ENCODE measurements at regions of chr14 and their contacts with region 1.

Region 1: DNA sequence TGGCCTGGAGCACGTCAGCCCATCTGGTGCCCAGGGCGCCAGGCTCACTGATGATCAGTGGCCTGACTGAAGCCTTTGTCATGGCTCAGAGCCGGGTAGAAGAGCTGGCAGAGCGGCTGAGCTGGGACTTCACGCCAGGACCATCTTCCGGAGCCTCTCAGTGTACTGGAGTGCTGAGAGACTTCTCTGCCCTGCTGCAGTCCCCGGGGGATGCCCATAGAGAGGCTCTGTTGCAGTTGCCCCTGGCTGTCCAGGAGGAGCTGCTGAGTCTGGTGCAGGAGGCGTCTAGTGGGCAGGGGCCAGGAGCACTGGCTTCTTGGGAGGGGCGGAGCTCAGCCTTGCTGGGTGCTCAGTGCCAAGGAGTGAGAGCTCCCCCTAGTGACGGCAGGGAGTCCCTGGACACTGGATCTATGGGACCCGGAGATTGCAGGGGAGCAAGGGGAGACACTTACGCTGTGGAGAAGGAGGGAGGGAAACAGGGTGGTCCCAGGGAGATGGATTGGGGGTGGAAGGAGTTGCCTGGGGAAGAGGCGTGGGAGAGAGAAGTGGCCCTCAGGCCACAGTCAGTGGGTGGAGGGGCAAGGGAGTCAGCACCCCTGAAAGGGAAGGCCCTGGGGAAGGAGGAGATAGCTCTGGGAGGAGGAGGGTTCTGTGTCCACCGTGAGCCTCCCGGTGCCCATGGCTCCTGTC is 2.0 kb downstream of the KHNYN start:
- DNase-seq: peak; percentile 95 to 96
- H3K4me3 ChIP-seq: peak overlapping the region in 1 of 4 experiments; percentile 76; a peak in 2 of 8 replicates
- H3K27ac ChIP-seq: no peak overlapping the region
- H3K4me1 ChIP-seq: peaks cover 6 to 21% (median 15%) of the 10 kb centered on the region in 4 experiments
- H3K27me3 ChIP-seq: peaks cover 0 to 17% (median 1%) of the 10 kb centered on the region in 4 experiments; a peak in 3 of 7 replicates
- CTCF ChIP-seq: peak; percentile 87 to 100 (median 99)
- EP300 ChIP-seq: no peak
- POLR2A ChIP-seq: no peak
- RAD21 ChIP-seq: peak; percentile 96 to 98

Region 2: DNA sequence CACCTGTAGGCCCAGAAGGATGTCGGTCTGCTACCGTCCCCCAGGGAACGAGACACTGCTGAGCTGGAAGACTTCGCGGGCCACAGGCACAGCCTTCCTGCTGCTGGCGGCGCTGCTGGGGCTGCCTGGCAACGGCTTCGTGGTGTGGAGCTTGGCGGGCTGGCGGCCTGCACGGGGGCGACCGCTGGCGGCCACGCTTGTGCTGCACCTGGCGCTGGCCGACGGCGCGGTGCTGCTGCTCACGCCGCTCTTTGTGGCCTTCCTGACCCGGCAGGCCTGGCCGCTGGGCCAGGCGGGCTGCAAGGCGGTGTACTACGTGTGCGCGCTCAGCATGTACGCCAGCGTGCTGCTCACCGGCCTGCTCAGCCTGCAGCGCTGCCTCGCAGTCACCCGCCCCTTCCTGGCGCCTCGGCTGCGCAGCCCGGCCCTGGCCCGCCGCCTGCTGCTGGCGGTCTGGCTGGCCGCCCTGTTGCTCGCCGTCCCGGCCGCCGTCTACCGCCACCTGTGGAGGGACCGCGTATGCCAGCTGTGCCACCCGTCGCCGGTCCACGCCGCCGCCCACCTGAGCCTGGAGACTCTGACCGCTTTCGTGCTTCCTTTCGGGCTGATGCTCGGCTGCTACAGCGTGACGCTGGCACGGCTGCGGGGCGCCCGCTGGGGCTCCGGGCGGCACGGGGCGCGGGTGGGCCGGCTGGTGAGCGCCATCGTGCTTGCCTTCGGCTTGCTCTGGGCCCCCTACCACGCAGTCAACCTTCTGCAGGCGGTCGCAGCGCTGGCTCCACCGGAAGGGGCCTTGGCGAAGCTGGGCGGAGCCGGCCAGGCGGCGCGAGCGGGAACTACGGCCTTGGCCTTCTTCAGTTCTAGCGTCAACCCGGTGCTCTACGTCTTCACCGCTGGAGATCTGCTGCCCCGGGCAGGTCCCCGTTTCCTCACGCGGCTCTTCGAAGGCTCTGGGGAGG is 120.8 kb before region 1 on chr14 and contains the start of gene LTB4R:
- CTCF ChIA-PET with region 1: interaction called, 664 read pairs
- POLR2A ChIA-PET with region 1: interaction called, 7 read pairs
- DNase-seq: no peak
- H3K4me3 ChIP-seq: no peak within 1 kb of the TSS
- H3K27ac ChIP-seq: no peak within 1 kb of the TSS
- H3K4me1 ChIP-seq: no peaks in the 10 kb centered on the region; a peak in 2 of 7 replicates
- H3K27me3 ChIP-seq: peaks cover 0 to 4% (median 0%) of the 10 kb centered on the region in 4 experiments; a peak in 3 of 7 replicates
- CTCF ChIP-seq: no peak
- EP300 ChIP-seq: no peak
- POLR2A ChIP-seq: no peak
- RAD21 ChIP-seq: no peak
- total RNA-seq, gene LTB4R: 4.1 and 6.8 TPM in 2 replicates

Region 3: DNA sequence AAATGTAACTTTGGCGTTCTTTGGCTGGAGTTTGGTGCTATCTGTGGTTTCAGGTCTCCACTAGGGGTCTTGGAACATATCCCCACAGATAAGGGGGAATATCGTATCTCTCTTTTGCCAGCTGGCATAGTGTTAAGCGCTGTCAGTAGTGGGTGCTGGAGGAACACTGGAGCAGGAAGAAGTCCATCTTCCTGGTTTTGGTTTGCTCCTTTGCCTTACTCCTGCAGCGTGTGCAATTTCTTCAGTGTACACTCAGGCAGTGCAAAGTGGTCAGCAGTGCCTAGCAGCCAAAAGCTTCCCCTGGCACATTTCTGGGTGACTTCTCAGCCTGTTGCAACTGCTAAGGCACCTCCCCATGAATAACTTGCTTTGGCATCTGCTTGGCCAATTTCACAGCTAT is 80.2 kb before region 1 on chr14:
- CTCF ChIA-PET with region 1: interaction called, 33 read pairs
- POLR2A ChIA-PET with region 1: interaction called, 5 read pairs
- DNase-seq: no peak
- H3K4me3 ChIP-seq: no peak overlapping the region
- H3K27ac ChIP-seq: no peak overlapping the region
- H3K4me1 ChIP-seq: no peaks in the 10 kb centered on the region
- H3K27me3 ChIP-seq: peaks cover 0 to 11% (median 9%) of the 10 kb centered on the region in 4 experiments; a peak in 5 of 7 replicates
- CTCF ChIP-seq: 0 out of 4 replicates have a peak, but pooled peaks of 1 of the 3 experiments have one; percentile 4
- EP300 ChIP-seq: no peak
- POLR2A ChIP-seq: no peak
- RAD21 ChIP-seq: 0 out of 4 replicates have a peak, but pooled peaks of 1 of the 2 experiments have one; percentile 2

Region 4: GRCh38 chr14:24378981-24379906 is 52.5 kb before region 1 on chr14:
- CTCF ChIA-PET with region 1: interaction called, 207 read pairs
- POLR2A ChIA-PET with region 1: interaction called, 10 read pairs
- DNase-seq: no peak
- H3K4me3 ChIP-seq: no peak overlapping the region
- H3K27ac ChIP-seq: no peak overlapping the region
- H3K4me1 ChIP-seq: peaks cover 11 to 25% (median 13%) of the 10 kb centered on the region in 4 experiments
- H3K27me3 ChIP-seq: no peaks in the 10 kb centered on the region
- CTCF ChIP-seq: no peak
- EP300 ChIP-seq: no peak
- POLR2A ChIP-seq: no peak
- RAD21 ChIP-seq: no peak

Region 5: DNA sequence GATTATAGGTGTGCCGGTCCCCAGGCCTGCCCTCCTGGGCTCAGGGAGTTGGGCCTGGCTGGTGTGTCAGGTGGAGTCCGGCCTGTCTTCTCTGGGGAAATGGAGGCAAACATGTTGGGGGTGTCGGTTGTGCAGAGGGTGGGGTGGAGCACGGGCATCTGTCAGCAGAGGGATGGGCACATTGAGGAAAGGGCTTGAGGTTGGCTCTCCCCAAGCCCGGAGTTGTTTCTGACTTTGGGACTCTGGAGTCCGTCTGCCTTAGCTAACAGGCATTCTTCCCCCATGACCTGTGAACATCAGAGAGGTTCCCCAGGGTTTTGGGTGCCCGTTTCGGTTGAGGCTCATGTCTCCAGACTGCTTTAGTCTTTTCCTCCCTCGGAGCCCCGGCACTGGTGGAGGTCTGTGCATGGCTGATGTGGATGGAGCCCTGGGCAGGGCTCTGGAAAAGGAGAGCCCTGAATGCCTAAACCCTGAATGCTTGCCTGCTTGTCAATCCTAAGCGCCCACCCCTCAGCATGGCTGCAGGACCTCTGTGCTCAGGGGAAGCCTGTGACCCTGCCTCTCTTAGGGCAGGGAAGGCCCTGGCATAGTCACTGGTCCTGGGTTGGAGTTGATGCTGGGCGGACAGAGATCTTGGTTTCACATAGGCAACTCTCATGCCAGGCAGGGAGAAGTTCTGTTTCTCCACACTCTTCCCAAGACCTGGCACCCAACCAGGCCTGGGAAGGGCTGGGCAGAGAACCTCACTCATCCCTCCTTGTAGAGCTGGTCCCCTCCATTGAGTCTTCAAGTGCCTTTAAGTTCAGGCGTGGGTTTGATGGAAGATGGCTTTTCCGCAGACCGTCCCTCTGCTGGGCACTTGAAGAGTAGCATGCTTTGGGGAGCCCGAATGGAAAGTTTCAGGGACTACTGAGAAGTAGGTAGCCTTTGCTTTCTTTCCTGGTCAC is 20.0 kb before region 1 on chr14:
- CTCF ChIA-PET with region 1: interaction called, 101 read pairs
- POLR2A ChIA-PET with region 1: interaction called, 28 read pairs
- DNase-seq: peak in 1 of 2 experiments; percentile 56
- H3K4me3 ChIP-seq: no peak overlapping the region
- H3K27ac ChIP-seq: no peak overlapping the region
- H3K4me1 ChIP-seq: no peaks in the 10 kb centered on the region
- H3K27me3 ChIP-seq: 0 out of 7 replicates have a peak, but pooled peaks cover 0 to 2% (median 0%) of the 10 kb centered on the region in 4 experiments
- CTCF ChIP-seq: peak; percentile 66 to 89 (median 84)
- EP300 ChIP-seq: no peak
- POLR2A ChIP-seq: no peak
- RAD21 ChIP-seq: peak; percentile 66 to 76

Region 6: GRCh38 chr14:24463884-24464785 is 32.4 kb after region 1 on chr14:
- CTCF ChIA-PET with region 1: no interaction called
- POLR2A ChIA-PET with region 1: no interaction called
- DNase-seq: no peak
- H3K4me3 ChIP-seq: no peak overlapping the region
- H3K27ac ChIP-seq: no peak overlapping the region
- H3K4me1 ChIP-seq: no peaks in the 10 kb centered on the region
- H3K27me3 ChIP-seq: no peaks in the 10 kb centered on the region
- CTCF ChIP-seq: no peak
- EP300 ChIP-seq: no peak
- POLR2A ChIP-seq: no peak
- RAD21 ChIP-seq: no peak

Region 7: GRCh38 chr14:24513009-24513408 is 81.3 kb after region 1 on chr14:
- CTCF ChIA-PET with region 1: no interaction called
- POLR2A ChIA-PET with region 1: no interaction called
- DNase-seq: peak in 1 of 2 experiments; percentile 54
- H3K4me3 ChIP-seq: no peak overlapping the region
- H3K27ac ChIP-seq: no peak overlapping the region
- H3K4me1 ChIP-seq: no peaks in the 10 kb centered on the region
- H3K27me3 ChIP-seq: 0 out of 7 replicates have a peak, but pooled peaks cover 0 to 2% (median 0%) of the 10 kb centered on the region in 4 experiments
- CTCF ChIP-seq: no peak
- EP300 ChIP-seq: no peak
- POLR2A ChIP-seq: no peak
- RAD21 ChIP-seq: no peak

Region 8: DNA sequence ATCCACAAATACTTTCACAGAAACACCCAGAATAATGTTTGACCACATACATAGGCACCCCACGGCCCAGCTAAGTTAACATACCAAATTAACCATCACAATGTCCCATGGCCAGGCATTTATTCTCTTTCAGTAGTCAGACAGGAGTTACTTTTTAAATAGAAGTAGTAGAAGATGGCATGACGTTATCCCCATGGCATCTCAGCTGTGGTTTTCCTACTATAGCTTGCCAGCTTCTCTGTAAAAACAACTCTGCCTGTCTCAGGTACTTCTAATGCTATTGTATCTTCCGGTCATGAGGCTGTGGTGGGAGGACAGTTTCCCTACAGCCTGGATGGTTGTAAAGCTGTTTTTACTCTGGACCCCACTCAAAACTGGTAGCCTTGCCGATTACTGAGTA is 125.0 kb after region 1 on chr14:
- CTCF ChIA-PET with region 1: no interaction called
- POLR2A ChIA-PET with region 1: no interaction called
- DNase-seq: no peak
- H3K4me3 ChIP-seq: no peak overlapping the region
- H3K27ac ChIP-seq: no peak overlapping the region
- H3K4me1 ChIP-seq: no peaks in the 10 kb centered on the region
- H3K27me3 ChIP-seq: no peaks in the 10 kb centered on the region
- CTCF ChIP-seq: no peak
- EP300 ChIP-seq: no peak
- POLR2A ChIP-seq: no peak
- RAD21 ChIP-seq: no peak